ENCODE measurements at regions of chr1 and their contacts with region 1.

Region 1: DNA sequence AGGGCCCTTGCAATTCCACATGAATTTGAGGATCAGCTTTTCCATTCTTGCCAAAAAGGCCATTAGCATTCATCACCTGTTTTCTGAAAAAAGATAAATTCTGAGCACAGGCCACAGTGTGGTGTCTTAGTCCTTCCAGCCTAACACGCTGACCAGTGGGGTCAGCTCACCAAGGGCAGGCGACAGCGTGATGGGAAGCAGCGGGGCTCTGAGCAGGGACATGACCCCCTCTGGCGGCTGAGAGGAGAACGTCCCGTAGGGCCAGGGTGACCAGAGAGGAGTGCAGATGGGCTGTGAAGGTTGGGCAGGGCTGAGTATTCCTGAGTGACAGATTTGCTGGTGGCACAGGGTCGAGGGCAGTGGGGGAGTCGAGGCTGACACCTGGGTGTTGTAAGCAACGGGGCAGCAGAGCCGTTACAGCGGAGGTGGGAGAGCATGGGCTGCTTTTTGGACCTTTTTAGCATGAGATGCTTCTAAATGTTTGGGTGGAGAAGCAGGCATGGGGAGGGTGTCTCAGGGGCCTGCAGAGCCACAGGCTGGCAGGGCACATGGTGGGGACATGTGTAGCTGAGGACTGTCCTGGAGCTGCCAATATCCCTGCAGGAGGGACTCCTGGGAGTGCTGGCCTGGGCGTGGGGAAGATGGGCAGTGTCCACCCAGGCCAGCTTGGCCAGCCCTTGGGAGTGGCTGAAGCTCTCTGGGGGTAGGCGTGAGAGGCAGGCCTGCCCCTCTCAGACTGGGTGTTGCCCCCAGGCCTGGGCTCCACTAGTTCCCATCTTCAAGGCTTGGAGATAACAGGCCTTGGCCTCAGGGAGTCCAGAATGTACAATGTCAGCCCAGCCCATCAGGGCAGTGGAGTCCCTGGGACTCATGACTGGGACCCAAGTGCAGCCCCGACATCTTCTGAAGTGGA is 8.6 kb upstream of the CALML6 start:
- DNase-seq: peak; percentile 89
- H3K4me3 ChIP-seq: no peak overlapping the region
- H3K27ac ChIP-seq: peak overlapping the region in 3 of 4 donors; percentile 0 to 13 (median 1)
- H3K4me1 ChIP-seq: peaks cover 10 to 25% (median 20%) of the 10 kb centered on the region in 4 donors
- H3K27me3 ChIP-seq: no peaks in the 10 kb centered on the region
- CTCF ChIP-seq: peak; percentile 85 to 96 (median 92)
- EP300 ChIP-seq: no peak
- POLR2A ChIP-seq: no peak

Region 2: GRCh38 chr1:1441002-1441888 is 465.2 kb before region 1 on chr1:
- in situ Hi-C with region 1: no loop called
- intact Hi-C with region 1: no loop called
- DNase-seq: peak; percentile 62
- H3K4me3 ChIP-seq: no peak overlapping the region
- H3K27ac ChIP-seq: peak overlapping the region in 1 of 4 donors; percentile 57
- H3K4me1 ChIP-seq: peaks cover 22 to 38% (median 35%) of the 10 kb centered on the region in 4 donors
- H3K27me3 ChIP-seq: no peaks in the 10 kb centered on the region
- CTCF ChIP-seq: peak; percentile 90 to 98 (median 93)
- EP300 ChIP-seq: no peak
- POLR2A ChIP-seq: no peak

Region 3: GRCh38 chr1:1779706-1780597 is 126.5 kb before region 1 on chr1:
- in situ Hi-C with region 1: loop called in 2 of 4 experiments (anchors 10 kb)
- intact Hi-C with region 1: loop called (anchors 5 kb)
- DNase-seq: peak; percentile 83
- H3K4me3 ChIP-seq: peak overlapping the region in 2 of 4 donors; percentile 67 to 97
- H3K27ac ChIP-seq: peak overlapping the region; percentile 91 to 97 (median 96)
- H3K4me1 ChIP-seq: peaks cover 62 to 82% (median 80%) of the 10 kb centered on the region in 4 donors
- H3K27me3 ChIP-seq: no peaks in the 10 kb centered on the region
- CTCF ChIP-seq: no peak
- EP300 ChIP-seq: no peak
- POLR2A ChIP-seq: peak; percentile 46

Region 4: GRCh38 chr1:1796466-1796865 is 110.0 kb before region 1 on chr1:
- in situ Hi-C with region 1: no loop called
- intact Hi-C with region 1: no loop called
- DNase-seq: no peak
- H3K4me3 ChIP-seq: no peak overlapping the region
- H3K27ac ChIP-seq: no peak overlapping the region
- H3K4me1 ChIP-seq: no peaks in the 10 kb centered on the region
- H3K27me3 ChIP-seq: no peaks in the 10 kb centered on the region
- CTCF ChIP-seq: peak in 2 of 5 experiments; percentile 11 to 13
- EP300 ChIP-seq: no peak
- POLR2A ChIP-seq: no peak

Region 5: GRCh38 chr1:1841575-1841995 is 64.9 kb before region 1 on chr1:
- in situ Hi-C with region 1: loop called in 1 of 4 experiments (anchors 10 kb)
- intact Hi-C with region 1: no loop called
- DNase-seq: no peak
- H3K4me3 ChIP-seq: no peak overlapping the region
- H3K27ac ChIP-seq: peak overlapping the region; percentile 3 to 33 (median 13)
- H3K4me1 ChIP-seq: peaks cover 19 to 50% (median 31%) of the 10 kb centered on the region in 4 donors
- H3K27me3 ChIP-seq: no peaks in the 10 kb centered on the region
- CTCF ChIP-seq: no peak
- EP300 ChIP-seq: no peak
- POLR2A ChIP-seq: no peak